ENCODE measurements at regions of chr10 and their contacts with region 1.

Region 1: DNA sequence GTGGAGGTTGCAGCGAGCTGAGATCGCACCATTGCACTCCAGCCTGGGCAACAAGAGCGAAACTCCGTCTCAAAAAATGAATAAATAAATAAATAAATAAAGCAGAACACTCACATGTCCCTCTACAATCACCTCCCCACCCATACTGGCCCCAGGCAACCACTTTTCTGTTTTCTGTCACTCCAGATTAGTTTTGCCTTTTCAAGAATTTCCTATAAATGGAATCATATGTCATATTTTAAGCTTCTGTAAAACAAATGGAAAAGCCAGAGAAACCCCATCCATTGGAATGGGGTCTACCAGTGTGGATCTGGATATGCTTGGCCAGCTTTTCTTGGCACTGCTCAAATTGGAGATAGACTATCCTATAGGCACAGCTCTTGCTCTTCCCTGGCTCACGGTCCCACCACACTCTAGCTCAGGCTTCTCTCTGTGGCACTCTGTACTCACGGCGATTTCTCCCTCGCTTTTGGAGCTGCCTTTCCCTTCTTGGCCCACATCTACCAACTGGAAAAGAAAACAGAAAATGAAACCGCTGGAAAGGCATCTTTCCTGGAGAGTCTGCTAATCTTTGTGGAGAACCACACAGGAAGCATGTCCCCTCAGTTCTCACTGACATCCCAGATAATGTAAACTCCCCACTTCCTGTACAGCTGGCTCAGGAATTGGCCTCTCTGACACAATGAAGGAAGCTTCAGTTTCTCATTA is 210.1 kb downstream of the JCAD start:
- DNase-seq: peak; percentile 86
- H3K4me3 ChIP-seq: peak overlapping the region in 1 of 3 experiments; percentile 52
- H3K27ac ChIP-seq: peak overlapping the region; percentile 81
- H3K4me1 ChIP-seq: peaks cover 31% of the 10 kb centered on the region
- H3K27me3 ChIP-seq: no peaks in the 10 kb centered on the region
- CTCF ChIP-seq: no peak
- POLR2A ChIP-seq: peak; percentile 64

Region 2: GRCh38 chr10:29804025-29804852 is 45.0 kb before region 1 on chr10:
- CTCF ChIA-PET with region 1: interaction called, 3 read pairs
- POLR2A ChIA-PET with region 1: interaction called, 3 read pairs
- dilution Hi-C with region 1: no loop called
- intact Hi-C with region 1: loop called (anchors 1 kb)
- DNase-seq: peak; percentile 99
- H3K4me3 ChIP-seq: peak overlapping the region in 1 of 3 experiments; percentile 31
- H3K27ac ChIP-seq: peak overlapping the region; percentile 99
- H3K4me1 ChIP-seq: peaks cover 54% of the 10 kb centered on the region
- H3K27me3 ChIP-seq: no peaks in the 10 kb centered on the region
- CTCF ChIP-seq: no peak
- POLR2A ChIP-seq: no peak